ENCODE measurements at regions of chr3 and their contacts with region 1.

Region 1: GRCh38 chr3:42101048-42101447 is 9.9 kb downstream of the TRAK1 start:
- DNase-seq: no peak
- H3K4me3 ChIP-seq: no peak overlapping the region
- H3K27me3 ChIP-seq: no peaks in the 10 kb centered on the region
- CTCF ChIP-seq: no peak

Region 2: DNA sequence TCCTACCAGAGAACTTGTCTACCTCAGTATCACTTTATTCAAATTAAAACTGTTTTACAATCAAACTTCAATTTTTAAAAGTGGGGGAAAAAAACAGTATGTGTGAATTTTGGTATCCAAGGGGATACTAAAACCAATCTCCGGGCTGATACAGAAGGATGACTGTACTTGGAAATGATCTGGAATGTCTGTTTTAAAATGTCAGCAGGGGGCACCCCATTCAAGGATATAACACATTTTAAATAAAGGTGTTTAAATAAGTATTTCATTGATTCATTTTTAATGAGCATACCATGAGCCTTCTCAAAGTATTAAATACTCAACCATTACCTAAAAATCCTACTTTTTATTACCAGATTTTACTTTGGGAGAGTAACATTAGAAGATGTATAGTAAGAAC is 207.1 kb before region 1 on chr3:
- CTCF ChIA-PET with region 1: interaction called, 50 read pairs
- POLR2A ChIA-PET with region 1: no interaction called
- DNase-seq: no peak
- H3K4me3 ChIP-seq: no peak overlapping the region
- H3K27me3 ChIP-seq: no peaks in the 10 kb centered on the region
- CTCF ChIP-seq: peak; percentile 46

Region 3: DNA sequence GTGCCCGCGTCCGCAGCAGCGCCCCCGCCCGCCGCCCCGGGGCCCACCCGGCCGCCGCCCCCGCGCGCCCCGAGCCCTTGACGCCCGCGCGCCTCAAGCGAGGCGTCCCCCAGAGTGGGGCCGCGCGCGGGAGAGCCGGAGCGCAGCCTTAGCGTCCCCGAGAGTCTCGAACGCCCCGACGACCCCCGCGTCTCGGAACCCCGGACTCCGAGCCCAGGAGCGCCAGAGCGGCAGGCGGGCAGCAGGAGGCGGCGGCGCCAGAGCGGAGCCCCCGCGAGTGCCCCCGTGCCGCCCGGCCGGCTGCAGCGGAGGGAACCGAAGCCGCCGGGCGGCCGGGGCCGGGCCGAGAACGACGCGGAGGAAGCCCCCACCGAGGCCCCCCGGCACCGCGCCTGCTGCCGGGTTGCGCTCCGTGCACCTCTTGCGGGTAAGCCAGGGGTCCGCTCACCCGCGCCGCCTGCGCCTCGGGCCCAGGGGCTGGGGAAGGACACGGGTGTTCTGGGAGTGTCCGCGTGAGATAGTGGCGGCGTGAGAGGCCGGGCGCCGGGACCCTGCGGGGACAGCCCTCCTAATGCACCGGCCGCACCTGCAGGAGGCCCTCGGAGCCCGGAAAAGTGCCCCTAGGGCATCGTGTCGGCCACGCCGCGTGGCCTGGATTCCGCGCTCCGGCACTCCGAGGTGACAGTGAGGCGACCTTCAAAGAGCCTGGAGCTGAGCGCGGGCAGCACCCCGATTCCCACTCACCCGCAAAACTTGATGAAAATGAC is 87.2 kb before region 1 on chr3:
- CTCF ChIA-PET with region 1: interaction called, 25 read pairs
- POLR2A ChIA-PET with region 1: no interaction called
- DNase-seq: no peak
- H3K4me3 ChIP-seq: peak overlapping the region; percentile 86
- H3K27me3 ChIP-seq: no peaks in the 10 kb centered on the region
- CTCF ChIP-seq: 0 out of 2 replicates have a peak, but pooled peaks have one; percentile 0

Region 4: DNA sequence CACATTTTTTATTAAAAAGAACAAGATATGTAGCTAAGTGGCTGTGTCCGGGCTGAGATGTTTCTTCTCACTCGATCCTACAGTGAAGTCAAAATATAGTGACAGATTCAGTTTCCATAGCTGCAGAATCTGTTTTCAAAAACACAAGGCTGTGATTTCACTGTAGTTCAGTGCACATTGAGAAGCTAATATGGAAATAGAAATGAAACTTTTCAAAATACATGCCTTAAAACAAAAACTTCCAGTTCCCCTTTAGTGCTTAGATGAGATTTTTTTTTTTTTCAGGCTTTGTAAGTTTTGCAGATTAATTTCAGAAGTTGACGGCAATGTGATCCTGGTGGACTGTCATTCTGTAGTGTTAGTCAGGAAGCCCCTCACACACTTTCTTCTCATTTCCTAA is 33.7 kb before region 1 on chr3:
- CTCF ChIA-PET with region 1: interaction called, 10 read pairs
- POLR2A ChIA-PET with region 1: no interaction called
- DNase-seq: no peak
- H3K4me3 ChIP-seq: no peak overlapping the region
- H3K27me3 ChIP-seq: no peaks in the 10 kb centered on the region
- CTCF ChIP-seq: no peak

Region 5: DNA sequence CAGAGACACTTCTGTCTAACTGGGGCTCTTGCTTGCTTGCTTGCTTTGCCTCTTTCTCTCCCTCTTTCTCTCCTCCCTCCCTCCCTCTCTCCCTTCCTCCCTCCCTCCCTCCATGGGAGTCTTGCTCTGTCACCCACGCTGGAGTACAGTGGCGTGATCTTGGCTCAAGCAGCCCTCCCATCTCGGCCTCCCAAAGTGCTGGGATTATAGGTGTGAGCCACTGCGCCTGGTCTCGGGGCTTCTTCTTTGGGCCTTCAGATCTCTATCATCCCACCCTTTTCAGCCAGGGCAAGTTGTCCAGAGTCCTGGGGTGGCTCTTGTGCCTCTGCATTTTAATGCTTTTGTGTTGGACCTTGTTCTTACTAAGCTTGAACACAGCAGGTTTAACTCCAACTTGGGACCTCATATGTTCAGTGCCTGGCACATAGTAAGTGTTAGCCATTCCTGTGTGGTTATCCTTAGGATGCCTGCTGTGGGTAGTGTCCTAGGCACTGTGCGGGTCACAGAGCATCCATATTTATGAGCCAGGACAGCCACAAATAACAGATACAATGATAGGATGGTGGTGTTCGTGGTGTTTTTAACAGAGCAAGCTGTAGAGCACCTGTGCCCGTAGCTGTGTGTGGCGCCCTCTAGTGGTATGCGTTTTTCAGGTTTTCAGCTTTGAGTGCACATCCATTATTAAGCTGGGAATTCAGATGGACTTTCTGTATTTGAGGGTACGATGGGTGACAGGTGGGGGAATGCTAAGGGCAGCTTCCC is 89.8 kb after region 1 on chr3:
- CTCF ChIA-PET with region 1: interaction called, 21 read pairs
- POLR2A ChIA-PET with region 1: no interaction called
- DNase-seq: no peak
- H3K4me3 ChIP-seq: no peak overlapping the region
- H3K27me3 ChIP-seq: no peaks in the 10 kb centered on the region
- CTCF ChIP-seq: peak; percentile 89

Region 6: GRCh38 chr3:42336103-42336502 is 235.1 kb after region 1 on chr3:
- CTCF ChIA-PET with region 1: no interaction called
- POLR2A ChIA-PET with region 1: no interaction called
- DNase-seq: no peak
- H3K4me3 ChIP-seq: no peak overlapping the region
- H3K27me3 ChIP-seq: no peaks in the 10 kb centered on the region
- CTCF ChIP-seq: no peak

Region 7: GRCh38 chr3:42410370-42411131 is 309.5 kb after region 1 on chr3 and contains the start of gene LYZL4:
- CTCF ChIA-PET with region 1: no interaction called
- POLR2A ChIA-PET with region 1: no interaction called
- DNase-seq: no peak
- H3K4me3 ChIP-seq: no peak within 1 kb of the TSS
- H3K27me3 ChIP-seq: no peaks in the 10 kb centered on the region; the same call in 1 of the 2 replicates
- CTCF ChIP-seq: no peak
- polyA plus RNA-seq, gene LYZL4: not detected in 2 replicates

Measured in BJ (cell line).